Body of pancreas (tissue), 4 donors: ENCODE measurements at regions of chr17 and their contacts with region 1.

Region 1: DNA sequence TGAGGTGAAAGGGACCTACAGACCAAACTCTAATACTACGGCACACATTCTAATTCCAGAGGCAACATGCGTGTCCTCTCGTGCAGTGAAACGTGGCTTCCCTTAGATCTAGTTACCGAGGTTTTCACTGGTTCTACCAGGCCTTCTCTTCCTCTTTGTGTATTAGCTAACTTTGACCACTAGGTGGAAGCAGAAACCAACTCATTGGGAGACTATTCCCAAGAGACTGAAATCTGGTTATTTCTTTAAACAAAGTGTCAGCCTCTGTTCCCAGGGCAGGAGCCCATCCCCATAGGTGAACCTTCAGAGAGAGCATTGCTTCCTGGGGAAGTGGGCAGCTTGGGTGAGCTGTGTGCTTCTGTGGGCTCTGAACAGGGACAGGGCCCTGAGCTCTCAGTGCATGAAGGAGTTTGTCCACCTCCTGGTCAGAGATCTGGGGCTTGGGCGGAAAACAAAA is 19.7 kb upstream of the RCVRN start:
- DNase-seq: peak in 2 of 4 donors; percentile 19 to 43
- ATAC-seq: peak; percentile 79
- H3K4me3 ChIP-seq: no peak overlapping the region
- H3K27ac ChIP-seq: no peak overlapping the region
- H3K4me1 ChIP-seq: peaks cover 5% of the 10 kb centered on the region
- H3K27me3 ChIP-seq: no peaks in the 10 kb centered on the region
- CTCF ChIP-seq: peak; percentile 65 to 86 (median 78)
- POLR2A ChIP-seq: no peak

Region 2: DNA sequence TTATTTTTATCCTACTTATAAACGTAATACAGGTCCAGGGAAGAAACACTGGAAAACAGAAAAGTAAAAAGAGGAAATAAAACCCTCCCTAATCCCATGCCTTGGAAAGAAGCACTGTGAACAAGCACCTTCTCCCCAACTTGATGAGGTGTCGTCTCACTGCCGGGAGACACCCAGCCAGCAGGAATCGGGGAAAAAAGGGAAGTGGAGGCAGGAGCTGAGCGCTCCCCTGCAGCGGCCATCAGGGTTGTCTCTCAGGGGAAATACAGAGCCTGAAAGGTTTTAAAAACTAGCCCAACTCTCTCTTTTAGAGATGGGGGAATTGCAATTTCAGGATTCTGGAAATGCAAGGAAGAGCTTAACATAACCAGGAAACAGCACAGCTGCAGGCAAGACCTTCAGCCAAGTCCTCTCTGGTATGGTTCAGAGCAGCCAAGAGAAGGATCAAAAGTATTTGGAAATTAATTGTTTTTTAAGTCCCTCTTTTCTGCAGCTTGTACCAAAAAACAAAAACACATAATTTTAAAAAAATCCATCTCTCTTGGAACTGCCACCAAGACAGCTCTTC is 76.6 kb after region 1 on chr17:
- intact Hi-C with region 1: no loop called
- DNase-seq: no peak
- ATAC-seq: no peak
- H3K4me3 ChIP-seq: no peak overlapping the region
- H3K27ac ChIP-seq: no peak overlapping the region
- H3K4me1 ChIP-seq: no peaks in the 10 kb centered on the region
- H3K27me3 ChIP-seq: no peaks in the 10 kb centered on the region
- CTCF ChIP-seq: no peak
- POLR2A ChIP-seq: no peak

Region 3: DNA sequence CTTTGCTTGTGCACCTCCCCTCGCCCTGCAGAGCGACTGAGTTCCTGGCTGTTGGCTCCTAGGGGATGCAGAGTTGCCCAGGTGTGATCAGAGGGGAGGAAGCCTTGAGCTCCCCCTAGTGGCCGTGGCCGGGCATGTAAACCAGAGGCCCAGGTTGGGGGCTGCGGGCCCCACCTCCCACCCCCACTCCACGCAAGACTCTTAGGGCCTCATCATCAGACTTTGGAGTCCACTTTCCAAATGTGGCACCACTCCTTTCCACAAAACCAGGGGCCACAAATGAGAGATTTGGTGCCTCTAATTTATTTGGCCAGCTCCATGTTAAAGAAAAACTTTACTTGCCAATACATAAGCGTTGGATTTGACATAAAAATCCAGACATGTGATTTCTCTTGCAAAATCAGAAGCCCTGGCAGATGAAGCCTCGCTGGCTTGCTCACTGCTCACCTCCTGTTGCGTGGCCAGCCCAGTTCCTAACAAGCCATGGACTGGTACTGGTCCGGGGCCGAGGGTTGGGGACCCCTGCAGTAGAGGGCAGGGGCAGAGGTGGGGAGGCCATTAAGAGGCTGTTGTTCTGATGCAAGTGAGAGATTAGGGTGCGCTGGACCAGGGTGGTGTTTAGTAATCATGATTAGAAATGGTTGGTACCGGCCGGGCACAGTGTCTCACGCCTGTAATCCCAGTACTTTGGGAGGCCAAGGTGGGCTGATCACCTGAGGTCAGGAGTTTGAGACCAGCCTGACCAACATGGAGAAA is 302.3 kb after region 1 on chr17:
- intact Hi-C with region 1: no loop called
- DNase-seq: peak in 2 of 4 donors; percentile 19 to 41
- ATAC-seq: no peak
- H3K4me3 ChIP-seq: no peak overlapping the region
- H3K27ac ChIP-seq: no peak overlapping the region
- H3K4me1 ChIP-seq: no peaks in the 10 kb centered on the region
- H3K27me3 ChIP-seq: no peaks in the 10 kb centered on the region
- CTCF ChIP-seq: peak in 6 of 7 experiments; percentile 16 to 42 (median 33)
- POLR2A ChIP-seq: no peak

Region 4: GRCh38 chr17:10628756-10629155 is 704.0 kb after region 1 on chr17:
- intact Hi-C with region 1: loop called (anchors 10 kb)
- DNase-seq: no peak
- ATAC-seq: no peak
- H3K4me3 ChIP-seq: no peak overlapping the region
- H3K27ac ChIP-seq: no peak overlapping the region
- H3K4me1 ChIP-seq: no peaks in the 10 kb centered on the region
- H3K27me3 ChIP-seq: no peaks in the 10 kb centered on the region
- CTCF ChIP-seq: peak in 1 of 7 experiments; percentile 15
- POLR2A ChIP-seq: no peak